HepG2 (cell line): ENCODE measurements at regions of chr5 and their contacts with region 1.

Region 1: GRCh38 chr5:44332285-44332971 is 56.8 kb downstream of the FGF10 start:
- DNase-seq: peak; percentile 17
- ATAC-seq: peak; percentile 79
- H3K4me3 ChIP-seq: no peak overlapping the region
- H3K27ac ChIP-seq: no peak overlapping the region
- H3K4me1 ChIP-seq: no peaks in the 10 kb centered on the region
- H3K27me3 ChIP-seq: no peaks in the 10 kb centered on the region
- CTCF ChIP-seq: peak; percentile 66
- EP300 ChIP-seq: no peak
- POLR2A ChIP-seq: no peak
- RAD21 ChIP-seq: peak; percentile 23; the same call in 1 of the 2 replicates

Region 2: DNA sequence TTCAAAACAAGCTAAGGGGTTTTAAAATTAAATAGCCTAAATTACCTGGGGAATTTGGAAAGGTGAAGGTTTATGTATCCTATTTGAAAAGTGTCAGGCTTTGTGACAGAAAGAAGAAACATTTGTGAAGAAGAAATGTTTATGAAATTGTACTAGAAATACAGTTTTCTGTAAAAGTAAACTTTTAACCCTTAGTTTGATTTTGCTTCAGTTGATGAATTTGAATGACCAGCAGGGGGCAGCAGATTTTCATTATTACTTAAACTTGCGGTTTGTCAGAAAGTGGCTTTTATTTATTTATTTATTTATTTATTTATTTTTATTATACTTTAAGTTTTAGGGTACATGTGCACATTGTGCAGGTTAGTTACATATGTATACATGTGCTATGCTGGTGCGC is 671.3 kb before region 1 on chr5:
- CTCF ChIA-PET with region 1: no interaction called
- POLR2A ChIA-PET with region 1: no interaction called
- in situ Hi-C with region 1: no loop called
- intact Hi-C with region 1: loop called (anchors 2 kb)
- DNase-seq: peak; percentile 40
- ATAC-seq: no peak
- H3K4me3 ChIP-seq: no peak overlapping the region
- H3K27ac ChIP-seq: no peak overlapping the region
- H3K4me1 ChIP-seq: no peaks in the 10 kb centered on the region
- H3K27me3 ChIP-seq: no peaks in the 10 kb centered on the region
- CTCF ChIP-seq: peak; percentile 16; the same call in 1 of the 2 replicates
- EP300 ChIP-seq: no peak
- POLR2A ChIP-seq: no peak
- RAD21 ChIP-seq: no peak

Region 3: DNA sequence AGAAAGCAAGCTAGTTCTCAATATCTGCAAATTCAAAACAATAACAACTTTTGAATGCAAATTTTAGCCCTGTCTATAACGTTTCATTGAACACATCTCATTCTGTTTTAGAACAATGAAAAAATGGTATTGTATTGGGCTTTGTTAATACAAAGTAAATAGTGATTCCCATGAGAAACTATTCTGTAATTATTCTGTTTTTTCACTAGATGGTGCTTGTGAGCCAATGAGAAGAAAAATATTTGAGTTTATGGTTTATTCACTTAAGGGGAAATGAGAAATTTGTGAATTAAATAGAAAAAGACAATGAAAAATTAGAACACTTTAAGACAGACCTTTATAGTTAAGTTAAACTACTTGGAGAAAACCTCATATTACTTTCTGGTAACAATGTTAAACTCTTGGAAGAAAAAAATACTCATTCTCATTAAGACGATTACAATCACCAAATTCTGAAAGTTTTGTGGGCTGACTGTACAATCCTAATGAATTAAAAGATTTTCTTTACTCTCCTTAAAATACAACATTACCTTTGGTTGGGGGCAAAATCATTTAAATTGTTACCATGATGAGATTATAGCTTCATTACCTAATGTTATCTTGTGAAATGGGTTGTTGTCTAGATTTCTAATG is 602.5 kb before region 1 on chr5:
- CTCF ChIA-PET with region 1: interaction called, 38 read pairs
- POLR2A ChIA-PET with region 1: no interaction called
- in situ Hi-C with region 1: loop called (anchors 5 kb)
- intact Hi-C with region 1: loop called (anchors 1 kb)
- DNase-seq: peak; percentile 15
- ATAC-seq: no peak
- H3K4me3 ChIP-seq: no peak overlapping the region
- H3K27ac ChIP-seq: no peak overlapping the region
- H3K4me1 ChIP-seq: no peaks in the 10 kb centered on the region
- H3K27me3 ChIP-seq: no peaks in the 10 kb centered on the region
- CTCF ChIP-seq: peak; percentile 47
- EP300 ChIP-seq: no peak
- POLR2A ChIP-seq: no peak
- RAD21 ChIP-seq: no peak

Region 4: GRCh38 chr5:43947870-43948269 is 384.6 kb before region 1 on chr5:
- CTCF ChIA-PET with region 1: no interaction called
- POLR2A ChIA-PET with region 1: no interaction called
- in situ Hi-C with region 1: no loop called
- intact Hi-C with region 1: loop called (anchors 10 kb)
- DNase-seq: no peak
- ATAC-seq: no peak
- H3K4me3 ChIP-seq: no peak overlapping the region
- H3K27ac ChIP-seq: no peak overlapping the region
- H3K4me1 ChIP-seq: no peaks in the 10 kb centered on the region
- H3K27me3 ChIP-seq: no peaks in the 10 kb centered on the region; a peak in 1 of 5 replicates
- CTCF ChIP-seq: no peak
- EP300 ChIP-seq: no peak
- POLR2A ChIP-seq: no peak
- RAD21 ChIP-seq: no peak